ENCODE measurements at regions of chr21 and their contacts with region 1.

Region 1: DNA sequence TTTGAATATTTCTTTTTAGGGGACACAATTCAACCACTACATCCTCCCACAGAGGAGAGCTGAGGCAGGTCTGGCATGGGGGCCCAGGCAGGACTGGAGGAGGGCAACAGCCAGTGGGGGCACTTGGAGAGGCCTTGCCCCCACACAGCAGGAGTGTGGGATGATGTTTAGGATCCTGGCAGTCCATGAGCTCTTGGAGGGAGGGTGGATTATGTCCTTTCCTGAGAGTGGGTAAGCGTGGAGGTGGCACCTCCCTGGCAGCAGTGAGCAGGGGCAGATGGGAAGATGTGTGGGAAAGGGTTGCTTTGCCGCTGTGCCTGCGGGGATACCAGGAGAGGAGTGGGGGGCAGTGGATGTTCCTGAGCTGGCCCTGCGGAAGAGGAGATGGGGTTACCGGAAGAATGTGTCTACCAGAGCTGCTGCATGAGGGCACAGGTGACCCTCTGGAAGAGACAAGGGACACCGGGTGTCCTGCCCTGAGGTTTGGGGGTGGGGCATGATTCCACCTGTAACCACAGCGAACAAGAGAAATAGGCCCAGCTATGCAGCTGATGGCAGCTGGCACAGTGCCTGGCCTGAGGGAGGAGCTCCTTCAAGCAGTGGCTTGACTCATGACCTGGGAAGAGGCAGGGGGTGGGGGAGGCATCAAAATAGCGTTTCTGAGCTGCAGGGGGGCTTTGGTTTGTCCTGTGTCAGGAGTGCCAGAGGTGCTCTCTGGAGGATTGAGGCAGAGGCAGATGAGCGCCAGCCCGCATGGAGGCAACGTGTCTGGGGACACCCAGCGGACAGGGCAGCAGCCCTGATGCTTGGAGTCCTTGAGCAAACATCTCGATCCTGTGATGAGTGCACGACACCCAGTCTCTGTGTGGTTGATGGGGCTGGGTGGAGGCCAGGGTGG is 123.9 kb upstream of the TMPRSS2 start:
- DNase-seq: peak; percentile 96
- ATAC-seq: peak; percentile 35
- H3K4me3 ChIP-seq: peak overlapping the region; percentile 22; the same call in 1 of the 2 replicates
- H3K27ac ChIP-seq: peak overlapping the region; percentile 99
- H3K4me1 ChIP-seq: peaks cover 75% of the 10 kb centered on the region
- H3K27me3 ChIP-seq: no peaks in the 10 kb centered on the region
- CTCF ChIP-seq: no peak

Region 2: GRCh38 chr21:41482301-41482700 is 149.5 kb before region 1 on chr21:
- CTCF ChIA-PET with region 1: no interaction called
- POLR2A ChIA-PET with region 1: no interaction called
- intact Hi-C with region 1: no loop called
- DNase-seq: peak; percentile 40
- ATAC-seq: peak; percentile 36
- H3K4me3 ChIP-seq: no peak overlapping the region
- H3K27ac ChIP-seq: no peak overlapping the region
- H3K4me1 ChIP-seq: peaks cover 7% of the 10 kb centered on the region
- H3K27me3 ChIP-seq: no peaks in the 10 kb centered on the region
- CTCF ChIP-seq: no peak

Region 3: GRCh38 chr21:41641821-41642701 is 10.2 kb after region 1 on chr21:
- CTCF ChIA-PET with region 1: interaction called, 4 read pairs
- POLR2A ChIA-PET with region 1: interaction called, 13 read pairs
- intact Hi-C with region 1: loop called (anchors 1 kb)
- DNase-seq: peak; percentile 97
- ATAC-seq: peak; percentile 87
- H3K4me3 ChIP-seq: peak overlapping the region; percentile 46
- H3K27ac ChIP-seq: peak overlapping the region; percentile 99
- H3K4me1 ChIP-seq: peaks cover 36% of the 10 kb centered on the region
- H3K27me3 ChIP-seq: no peaks in the 10 kb centered on the region
- CTCF ChIP-seq: no peak

Region 4: GRCh38 chr21:41655259-41655658 is 23.4 kb after region 1 on chr21:
- CTCF ChIA-PET with region 1: no interaction called
- POLR2A ChIA-PET with region 1: interaction called, 21 read pairs
- intact Hi-C with region 1: no loop called
- DNase-seq: no peak
- ATAC-seq: no peak
- H3K4me3 ChIP-seq: no peak overlapping the region
- H3K27ac ChIP-seq: no peak overlapping the region
- H3K4me1 ChIP-seq: peaks cover 39% of the 10 kb centered on the region
- H3K27me3 ChIP-seq: no peaks in the 10 kb centered on the region
- CTCF ChIP-seq: no peak

Measured in PC-3 (cell line).